ENCODE measurements at regions of chr6 and their contacts with region 1.

Region 1: GRCh38 chr6:2531426-2532215 is 219.1 kb downstream of the MYLK4 start:
- DNase-seq: peak; percentile 69 to 87 (median 82)
- H3K4me3 ChIP-seq: no peak overlapping the region
- H3K4me3 Mint-ChIP-seq: peak overlapping the region in 1 of 2 donors; percentile 71
- H3K27ac ChIP-seq: no peak overlapping the region
- H3K27ac Mint-ChIP-seq: peak overlapping the region in 5 of 7 donors; percentile 3 to 83 (median 77)
- H3K4me1 ChIP-seq: peaks cover 29 to 49% of the 10 kb centered on the region in 2 donors
- H3K4me1 Mint-ChIP-seq: peaks cover 48% of the 10 kb centered on the region
- H3K27me3 ChIP-seq: peaks cover 44 to 64% of the 10 kb centered on the region in 2 donors
- H3K27me3 Mint-ChIP-seq: peaks cover 62 to 67% (median 64%) of the 10 kb centered on the region in 3 donors
- CTCF ChIP-seq: no peak

Region 2: GRCh38 chr6:2412731-2413130 is 118.9 kb before region 1 on chr6:
- intact Hi-C with region 1: no loop called
- DNase-seq: no peak
- H3K4me3 ChIP-seq: no peak overlapping the region
- H3K4me3 Mint-ChIP-seq: no peak overlapping the region
- H3K27ac ChIP-seq: no peak overlapping the region
- H3K27ac Mint-ChIP-seq: no peak overlapping the region
- H3K4me1 ChIP-seq: peaks cover 14% of the 10 kb centered on the region in 2 donors
- H3K4me1 Mint-ChIP-seq: peaks cover 17% of the 10 kb centered on the region
- H3K27me3 ChIP-seq: no peaks in the 10 kb centered on the region
- H3K27me3 Mint-ChIP-seq: peaks cover 0 to 1% (median 0%) of the 10 kb centered on the region in 3 donors
- CTCF ChIP-seq: no peak

Region 3: DNA sequence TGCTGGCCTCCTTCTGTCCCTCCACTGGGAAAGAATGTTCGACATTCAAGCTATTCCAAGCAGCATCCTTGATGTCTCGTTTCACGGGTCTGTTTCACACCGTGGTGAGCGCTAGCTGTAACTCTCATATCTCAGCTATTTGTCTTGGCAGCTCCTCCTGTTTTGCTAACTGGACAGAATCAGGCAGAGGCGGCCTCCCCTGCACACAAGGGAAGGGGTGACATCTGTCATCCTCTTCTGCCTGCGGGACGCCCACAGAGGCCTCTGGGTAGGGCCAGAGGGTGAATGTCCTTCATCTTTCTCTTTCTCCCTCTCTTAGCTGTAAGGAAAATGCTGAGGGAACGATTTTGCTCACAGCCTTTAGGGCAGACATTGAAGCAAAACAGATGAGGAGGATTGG is 53.4 kb before region 1 on chr6:
- intact Hi-C with region 1: no loop called
- DNase-seq: no peak
- H3K4me3 ChIP-seq: no peak overlapping the region
- H3K4me3 Mint-ChIP-seq: no peak overlapping the region
- H3K27ac ChIP-seq: no peak overlapping the region
- H3K27ac Mint-ChIP-seq: peak overlapping the region in 1 of 7 donors; percentile 40
- H3K4me1 ChIP-seq: peaks cover 9 to 12% of the 10 kb centered on the region in 2 donors
- H3K4me1 Mint-ChIP-seq: peaks cover 15% of the 10 kb centered on the region
- H3K27me3 ChIP-seq: no peaks in the 10 kb centered on the region
- H3K27me3 Mint-ChIP-seq: peaks cover 5 to 17% (median 6%) of the 10 kb centered on the region in 3 donors
- CTCF ChIP-seq: no peak

Region 4: GRCh38 chr6:2738373-2738979 is 206.9 kb after region 1 on chr6:
- intact Hi-C with region 1: loop called in 1 of 2 experiments (anchors 10 kb)
- DNase-seq: peak; percentile 43 to 58 (median 50)
- H3K4me3 ChIP-seq: no peak overlapping the region
- H3K4me3 Mint-ChIP-seq: no peak overlapping the region
- H3K27ac ChIP-seq: no peak overlapping the region
- H3K27ac Mint-ChIP-seq: peak overlapping the region in 4 of 7 donors; percentile 31 to 71 (median 63)
- H3K4me1 ChIP-seq: peaks cover 8 to 9% of the 10 kb centered on the region in 2 donors
- H3K4me1 Mint-ChIP-seq: peaks cover 26% of the 10 kb centered on the region
- H3K27me3 ChIP-seq: no peaks in the 10 kb centered on the region
- H3K27me3 Mint-ChIP-seq: peaks cover 0 to 4% (median 0%) of the 10 kb centered on the region in 3 donors
- CTCF ChIP-seq: peak; percentile 73

Measured in CD14-positive monocyte (primary cell).